ENCODE measurements at regions of chr14 and their contacts with region 1.

Region 1: GRCh38 chr14:55411426-55412389 is at the start of gene ATG14:
- DNase-seq: peak; percentile 87 to 92
- ATAC-seq: peak; percentile 98 to 99 (median 98)
- H3K4me3 ChIP-seq: peak within 1 kb of the TSS; percentile 82
- H3K27ac ChIP-seq: peak within 1 kb of the TSS; percentile 96
- H3K4me1 ChIP-seq: peaks cover 22% of the 10 kb centered on the region
- H3K27me3 ChIP-seq: no peaks in the 10 kb centered on the region
- CTCF ChIP-seq: no peak
- total RNA-seq, gene ATG14: 7.4 to 15.1 (median 11.0) TPM

Region 2: DNA sequence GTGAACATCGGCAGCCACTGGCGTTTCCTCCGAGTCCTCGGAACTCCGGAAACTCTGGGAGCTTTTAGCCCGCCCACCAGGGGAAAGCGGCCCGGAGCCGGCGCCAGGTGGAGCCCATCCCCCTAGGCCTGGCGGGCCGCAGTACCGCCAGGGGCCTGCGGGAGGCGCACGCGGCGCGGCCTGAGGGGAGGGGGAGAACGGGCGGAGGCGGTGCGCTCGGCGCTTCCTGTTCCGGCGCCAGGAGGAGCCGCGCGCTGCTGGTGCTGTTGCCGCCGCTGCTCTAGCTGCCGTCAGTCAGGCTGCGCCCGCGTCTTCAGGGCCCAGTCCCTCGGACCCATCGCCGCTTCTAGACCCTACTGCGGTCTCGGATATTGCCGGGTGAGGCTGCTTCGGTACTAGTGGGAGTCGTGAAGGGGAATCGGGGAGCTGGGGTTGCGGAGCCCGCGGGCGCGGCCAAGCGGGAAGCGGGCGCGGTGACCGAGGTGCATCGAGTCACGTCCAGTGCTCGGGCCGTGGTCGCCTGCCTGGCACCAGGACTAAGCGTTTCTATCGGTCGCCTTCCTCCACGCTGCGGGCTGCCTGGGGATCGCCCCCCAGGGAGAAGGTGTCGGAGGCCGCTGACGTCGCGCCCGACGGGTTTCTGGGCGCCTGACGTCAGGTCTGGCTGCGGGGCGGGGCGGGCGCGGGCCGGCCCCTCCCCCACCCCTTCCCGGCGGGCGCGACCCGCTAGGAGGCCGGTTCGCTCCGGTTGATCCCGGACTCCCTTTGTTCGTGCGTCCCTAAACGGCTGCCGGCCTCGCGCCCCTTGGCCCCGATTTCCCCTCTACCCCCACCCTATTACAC is 360.1 kb before region 1 on chr14 and contains the start of gene MAPK1IP1L:
- intact Hi-C with region 1: loop called in 1 of 2 experiments (anchors 10 kb)
- DNase-seq: peak; percentile 90 to 95
- ATAC-seq: peak; percentile 98 to 99 (median 98)
- H3K4me3 ChIP-seq: peak within 1 kb of the TSS; percentile 97
- H3K27ac ChIP-seq: peak within 1 kb of the TSS; percentile 100
- H3K4me1 ChIP-seq: peaks cover 11% of the 10 kb centered on the region
- H3K27me3 ChIP-seq: no peaks in the 10 kb centered on the region
- CTCF ChIP-seq: peak; percentile 100
- total RNA-seq, gene MAPK1IP1L: 34.1 to 60.1 (median 56.3) TPM

Region 3: GRCh38 chr14:55191203-55192053 is 220.3 kb before region 1 on chr14 and contains the start of gene DLGAP5:
- intact Hi-C with region 1: loop called in 1 of 2 experiments (anchors 5 kb)
- DNase-seq: peak; percentile 87 to 92
- ATAC-seq: peak; percentile 98 to 100 (median 99)
- H3K4me3 ChIP-seq: peak within 1 kb of the TSS; percentile 81
- H3K27ac ChIP-seq: peak within 1 kb of the TSS; percentile 53
- H3K4me1 ChIP-seq: no peaks in the 10 kb centered on the region
- H3K27me3 ChIP-seq: no peaks in the 10 kb centered on the region
- CTCF ChIP-seq: no peak
- total RNA-seq, gene DLGAP5: 0.10 to 0.29 TPM in 2 of 4 donors, not detected in the others

Measured in psoas muscle (tissue), 8 donors.